Colonic mucosa (tissue), 4 donors: ENCODE measurements at regions of chr19 and their contacts with region 1.

Region 1: GRCh38 chr19:47697863-47698609 is 15.2 kb upstream of the EHD2 start:
- DNase-seq: peak; percentile 74
- H3K4me3 ChIP-seq: no peak overlapping the region
- H3K27ac ChIP-seq: no peak overlapping the region
- H3K4me1 ChIP-seq: no peaks in the 10 kb centered on the region
- H3K27me3 ChIP-seq: no peaks in the 10 kb centered on the region
- CTCF ChIP-seq: peak; percentile 96

Region 2: GRCh38 chr19:47514869-47515588 is 183.0 kb before region 1 on chr19 and contains the start of gene NAPA:
- intact Hi-C with region 1: loop called (anchors 10 kb)
- DNase-seq: peak; percentile 100
- H3K4me3 ChIP-seq: peak within 1 kb of the TSS; percentile 92
- H3K27ac ChIP-seq: peak within 1 kb of the TSS; percentile 82
- H3K4me1 ChIP-seq: peaks cover 12% of the 10 kb centered on the region
- H3K27me3 ChIP-seq: no peaks in the 10 kb centered on the region
- CTCF ChIP-seq: no peak
- total RNA-seq, gene NAPA: 111 to 115 TPM

Region 3: DNA sequence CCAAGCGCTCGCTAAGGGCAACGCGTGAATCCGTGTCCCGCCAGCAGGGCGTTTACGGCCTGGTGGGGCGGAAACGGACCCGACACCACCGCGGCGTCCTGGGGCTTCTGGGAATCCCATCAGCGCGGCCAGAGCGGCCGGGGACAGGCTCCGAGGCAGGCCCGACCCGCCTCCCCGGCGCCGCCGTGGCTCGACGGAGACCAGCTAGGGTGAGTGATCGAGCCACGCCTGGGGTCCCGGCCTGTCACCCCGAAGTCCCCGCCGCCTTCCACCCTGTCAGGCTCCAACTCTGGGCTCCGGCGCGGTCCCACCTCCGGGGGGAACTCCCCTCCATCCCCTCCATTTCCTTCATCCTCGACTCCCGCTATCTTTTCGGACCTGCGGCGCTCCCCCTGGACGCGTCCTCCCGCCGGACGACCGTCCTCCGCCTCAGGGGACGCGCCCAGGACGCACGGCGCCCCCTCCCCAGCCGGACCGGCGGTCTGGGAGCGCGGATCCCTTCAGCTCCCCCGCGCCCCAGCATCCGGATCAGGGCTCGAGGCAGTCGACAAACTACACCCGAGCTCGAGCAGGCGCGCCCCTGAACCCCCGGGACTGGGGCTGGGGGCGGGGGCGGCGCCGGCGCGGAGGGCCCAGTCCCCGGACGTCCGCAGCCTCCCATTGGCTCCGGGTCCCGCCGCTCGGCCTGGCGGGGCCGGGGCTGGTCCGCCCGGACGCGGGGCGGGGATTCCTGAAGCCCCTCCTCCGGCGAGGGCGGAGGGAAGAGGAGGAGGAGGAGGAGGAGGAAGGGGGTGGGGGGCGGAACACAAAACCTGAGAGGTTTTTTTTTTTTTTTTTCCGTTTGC is 89.7 kb before region 1 on chr19:
- intact Hi-C with region 1: loop called (anchors 5 kb)
- DNase-seq: peak; percentile 95
- H3K4me3 ChIP-seq: peak overlapping the region; percentile 69
- H3K27ac ChIP-seq: peak overlapping the region; percentile 92
- H3K4me1 ChIP-seq: peaks cover 8% of the 10 kb centered on the region
- H3K27me3 ChIP-seq: no peaks in the 10 kb centered on the region
- CTCF ChIP-seq: peak; percentile 12

Region 4: GRCh38 chr19:47729992-47730889 is 32.2 kb after region 1 on chr19:
- intact Hi-C with region 1: no loop called
- DNase-seq: peak; percentile 75
- H3K4me3 ChIP-seq: no peak overlapping the region
- H3K27ac ChIP-seq: peak overlapping the region; percentile 40
- H3K4me1 ChIP-seq: peaks cover 9% of the 10 kb centered on the region
- H3K27me3 ChIP-seq: no peaks in the 10 kb centered on the region
- CTCF ChIP-seq: no peak

Region 5: DNA sequence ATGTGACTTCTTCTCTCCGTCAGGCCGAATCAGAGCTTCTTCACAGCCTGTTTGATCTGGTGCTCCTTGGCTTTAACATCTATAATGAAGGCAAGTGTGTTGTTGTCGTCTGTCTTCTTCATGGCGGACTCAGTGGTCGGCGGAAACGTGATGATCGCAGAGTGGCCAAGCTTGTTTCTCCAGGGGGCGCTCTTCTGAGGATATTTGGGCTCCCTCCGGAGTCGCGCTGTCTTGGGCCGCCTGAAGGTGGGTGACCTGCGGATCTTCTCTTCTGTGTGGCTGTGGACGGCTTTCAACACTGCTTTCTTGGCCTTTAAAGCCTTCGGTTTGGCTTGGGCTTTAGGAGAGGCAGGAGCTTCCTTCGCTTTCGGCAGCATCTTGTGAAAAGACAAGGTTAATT is 96.5 kb after region 1 on chr19:
- intact Hi-C with region 1: no loop called
- DNase-seq: no peak
- H3K4me3 ChIP-seq: no peak overlapping the region
- H3K27ac ChIP-seq: no peak overlapping the region
- H3K4me1 ChIP-seq: no peaks in the 10 kb centered on the region
- H3K27me3 ChIP-seq: no peaks in the 10 kb centered on the region
- CTCF ChIP-seq: no peak